Activated CD4-positive, alpha-beta memory T cell treated with anti-CD3 and anti-CD28 coated beads for 36 hours (primary cell): ENCODE measurements at regions of chr1 and their contacts with region 1.

Region 1: DNA sequence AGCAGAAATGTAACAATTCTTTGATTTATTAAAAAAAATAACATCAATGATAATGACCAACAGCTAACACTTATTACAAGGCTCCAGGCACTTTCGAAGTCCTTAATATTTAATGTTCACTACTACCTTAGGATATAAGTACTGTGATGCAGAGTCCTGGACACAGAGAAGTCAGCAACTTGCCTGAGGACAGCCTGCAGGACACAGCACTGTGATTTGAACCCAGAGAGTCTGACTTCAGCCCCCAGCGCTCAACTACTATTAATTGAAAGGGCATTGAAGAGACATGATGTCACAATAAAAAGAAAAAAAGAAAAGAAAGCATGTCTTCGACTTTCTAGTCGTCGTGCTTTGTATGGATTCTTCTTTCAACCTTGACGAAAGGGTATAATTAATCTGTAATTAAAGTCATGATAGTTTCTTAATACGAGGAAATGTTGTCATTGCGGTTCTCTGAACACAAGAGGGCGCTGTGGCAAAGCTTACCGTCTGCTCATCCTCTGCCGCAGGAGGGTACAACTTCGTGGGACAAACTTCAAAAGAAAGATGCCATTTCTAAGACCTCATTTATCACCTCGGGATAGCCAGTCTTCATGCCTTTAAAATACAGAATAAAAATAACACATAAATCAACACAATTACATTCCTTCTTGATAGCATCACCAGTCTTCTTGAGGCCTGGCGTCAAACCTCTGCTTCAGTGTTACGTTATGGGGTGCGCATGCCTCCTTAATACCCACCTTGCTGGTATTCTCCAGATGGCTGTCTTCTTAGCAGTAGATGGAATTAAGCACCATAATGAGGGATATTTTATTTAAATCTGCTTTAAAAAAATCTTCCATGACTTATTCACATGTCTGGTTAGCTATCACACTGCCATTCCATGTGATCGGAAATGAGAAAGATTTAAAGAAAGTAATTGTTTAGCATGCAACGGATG is 240.1 kb downstream of the DISC1 start:
- DNase-seq: peak; percentile 68
- H3K4me3 Mint-ChIP-seq: no peak overlapping the region
- H3K27ac Mint-ChIP-seq: no peak overlapping the region
- H3K4me1 Mint-ChIP-seq: peaks cover 15% of the 10 kb centered on the region
- H3K27me3 Mint-ChIP-seq: no peaks in the 10 kb centered on the region

Region 2: GRCh38 chr1:231931846-231932454 is 65.3 kb after region 1 on chr1:
- CTCF ChIA-PET with region 1: interaction called, 55 read pairs
- POLR2A ChIA-PET with region 1: no interaction called
- intact Hi-C with region 1: loop called (anchors 2 kb)
- DNase-seq: peak; percentile 60
- H3K4me3 Mint-ChIP-seq: no peak overlapping the region
- H3K27ac Mint-ChIP-seq: no peak overlapping the region
- H3K4me1 Mint-ChIP-seq: peaks cover 10% of the 10 kb centered on the region
- H3K27me3 Mint-ChIP-seq: no peaks in the 10 kb centered on the region